Motor neuron (in vitro differentiated cells): ENCODE measurements at regions of chr7 and their contacts with region 1.

Region 1: DNA sequence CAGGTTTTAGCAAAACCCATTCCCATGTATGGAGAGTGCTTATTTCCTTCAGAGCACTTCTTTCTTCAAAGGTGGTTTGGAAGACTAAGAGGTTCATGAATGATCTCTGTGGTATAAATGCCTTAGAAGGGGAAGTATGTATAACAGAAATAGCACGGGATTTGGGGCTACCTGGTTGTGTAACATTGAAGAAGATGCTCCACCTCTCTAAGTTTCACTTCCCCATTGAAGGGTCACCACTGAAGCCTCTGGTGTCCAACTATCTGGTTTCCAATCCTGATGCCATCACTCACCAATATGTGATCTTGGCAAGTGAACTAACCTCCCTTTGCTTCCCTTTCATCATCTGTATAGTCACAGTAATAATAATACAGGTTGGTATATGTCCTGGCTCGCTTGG is 37.2 kb downstream of the CYCS start:
- ATAC-seq: no peak
- H3K4me3 ChIP-seq: no peak overlapping the region
- H3K27ac ChIP-seq: no peak overlapping the region
- H3K4me1 ChIP-seq: peaks cover 16 to 21% of the 10 kb centered on the region in 2 donors

Region 2: DNA sequence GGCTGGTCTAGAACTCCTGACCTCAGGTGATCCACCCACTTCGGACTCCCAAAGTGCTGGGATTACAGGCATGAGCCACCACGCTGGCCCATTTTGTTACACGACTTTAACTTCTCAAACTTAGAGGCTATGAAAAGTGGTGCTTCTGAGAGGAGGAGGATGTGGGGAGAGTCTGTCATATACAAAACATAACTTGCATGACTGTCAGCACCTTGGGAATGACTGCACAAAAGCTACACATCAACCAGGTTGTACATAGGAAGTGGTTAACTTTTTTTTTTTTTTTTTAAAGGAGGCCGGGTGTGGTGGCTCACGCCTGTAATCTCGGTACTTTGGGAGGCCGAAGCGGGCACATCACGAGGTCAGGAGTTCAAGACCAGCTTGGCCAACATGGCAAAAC is 287.2 kb before region 1 on chr7:
- in situ Hi-C with region 1: loop called in 8 of 9 experiments (anchors 10 to 25 kb)
- ATAC-seq: no peak
- H3K4me3 ChIP-seq: no peak overlapping the region
- H3K27ac ChIP-seq: no peak overlapping the region
- H3K4me1 ChIP-seq: peaks cover 0 to 13% of the 10 kb centered on the region in 2 donors

Region 3: GRCh38 chr7:25259587-25260243 is 171.9 kb after region 1 on chr7:
- in situ Hi-C with region 1: no loop called
- ATAC-seq: peak; percentile 71 to 94 (median 86)
- H3K4me3 ChIP-seq: no peak overlapping the region
- H3K27ac ChIP-seq: no peak overlapping the region
- H3K4me1 ChIP-seq: peaks cover 6 to 34% of the 10 kb centered on the region in 2 donors